PC-9 (cell line): ENCODE measurements at regions of chr9 and their contacts with region 1.

Region 1: DNA sequence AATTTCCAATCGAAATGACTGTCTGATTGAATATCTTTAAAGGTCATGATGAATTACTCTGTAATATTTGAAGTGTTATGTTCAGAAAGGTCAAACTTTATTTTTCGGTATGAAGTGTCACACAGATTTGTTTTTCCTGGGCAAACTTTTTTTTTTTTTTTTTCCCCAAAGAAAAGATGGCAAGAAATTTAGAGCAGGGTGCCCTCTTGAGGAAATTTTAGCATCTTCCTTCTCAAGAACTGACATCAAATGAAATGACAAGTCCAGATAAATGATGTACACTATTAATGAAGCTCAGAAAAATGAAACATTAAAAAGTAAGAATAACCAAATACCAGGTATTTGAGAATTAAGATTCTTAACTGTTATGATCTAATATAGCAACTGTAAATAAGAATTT is 123.6 kb downstream of the INVS start:
- DNase-seq: no peak
- H3K4me3 ChIP-seq: no peak overlapping the region
- H3K27ac ChIP-seq: no peak overlapping the region
- H3K4me1 ChIP-seq: no peaks in the 10 kb centered on the region
- H3K27me3 ChIP-seq: no peaks in the 10 kb centered on the region
- CTCF ChIP-seq: peak; percentile 55

Region 2: GRCh38 chr9:99184475-99185347 is 1038.0 kb before region 1 on chr9:
- CTCF ChIA-PET with region 1: no interaction called
- POLR2A ChIA-PET with region 1: no interaction called
- intact Hi-C with region 1: loop called (anchors 10 kb)
- DNase-seq: peak; percentile 59 to 75
- H3K4me3 ChIP-seq: no peak overlapping the region
- H3K27ac ChIP-seq: no peak overlapping the region
- H3K4me1 ChIP-seq: no peaks in the 10 kb centered on the region
- H3K27me3 ChIP-seq: peaks cover 9% of the 10 kb centered on the region; the same call in 1 of the 2 replicates
- CTCF ChIP-seq: peak; percentile 90

Region 3: GRCh38 chr9:99266255-99267023 is 956.2 kb before region 1 on chr9:
- CTCF ChIA-PET with region 1: no interaction called
- POLR2A ChIA-PET with region 1: no interaction called
- intact Hi-C with region 1: loop called (anchors 2 kb)
- DNase-seq: peak in 1 of 2 experiments; percentile 57
- H3K4me3 ChIP-seq: no peak overlapping the region
- H3K27ac ChIP-seq: no peak overlapping the region
- H3K4me1 ChIP-seq: no peaks in the 10 kb centered on the region
- H3K27me3 ChIP-seq: no peaks in the 10 kb centered on the region
- CTCF ChIP-seq: peak; percentile 83

Region 4: GRCh38 chr9:99807276-99807852 is 415.3 kb before region 1 on chr9:
- CTCF ChIA-PET with region 1: interaction called, 3 read pairs
- POLR2A ChIA-PET with region 1: no interaction called
- intact Hi-C with region 1: loop called (anchors 5 kb)
- DNase-seq: peak; percentile 65 to 73
- H3K4me3 ChIP-seq: no peak overlapping the region
- H3K27ac ChIP-seq: no peak overlapping the region
- H3K4me1 ChIP-seq: peaks cover 15% of the 10 kb centered on the region
- H3K27me3 ChIP-seq: no peaks in the 10 kb centered on the region
- CTCF ChIP-seq: peak; percentile 87

Region 5: GRCh38 chr9:100028201-100028784 is 194.4 kb before region 1 on chr9:
- CTCF ChIA-PET with region 1: interaction called, 8 read pairs
- POLR2A ChIA-PET with region 1: no interaction called
- intact Hi-C with region 1: loop called (anchors 2 kb)
- DNase-seq: peak; percentile 45 to 61
- H3K4me3 ChIP-seq: no peak overlapping the region
- H3K27ac ChIP-seq: no peak overlapping the region
- H3K4me1 ChIP-seq: no peaks in the 10 kb centered on the region
- H3K27me3 ChIP-seq: no peaks in the 10 kb centered on the region
- CTCF ChIP-seq: peak; percentile 87